Activated CD8-positive, alpha-beta T cell treated with anti-CD3 and anti-CD28 coated beads, Interleukin-2, amount 10 ng/mL, durations not matched to agents 7 days and 5 days (primary cell): ENCODE measurements at regions of chr10 and their contacts with region 1.

Region 1: GRCh38 chr10:12782537-12782936 is 219.0 kb downstream of the CCDC3 start:
- DNase-seq: peak; percentile 48
- ATAC-seq: no peak
- H3K4me3 Mint-ChIP-seq: no peak overlapping the region
- H3K27ac Mint-ChIP-seq: no peak overlapping the region
- H3K4me1 Mint-ChIP-seq: peaks cover 4% of the 10 kb centered on the region
- H3K27me3 Mint-ChIP-seq: no peaks in the 10 kb centered on the region

Region 2: DNA sequence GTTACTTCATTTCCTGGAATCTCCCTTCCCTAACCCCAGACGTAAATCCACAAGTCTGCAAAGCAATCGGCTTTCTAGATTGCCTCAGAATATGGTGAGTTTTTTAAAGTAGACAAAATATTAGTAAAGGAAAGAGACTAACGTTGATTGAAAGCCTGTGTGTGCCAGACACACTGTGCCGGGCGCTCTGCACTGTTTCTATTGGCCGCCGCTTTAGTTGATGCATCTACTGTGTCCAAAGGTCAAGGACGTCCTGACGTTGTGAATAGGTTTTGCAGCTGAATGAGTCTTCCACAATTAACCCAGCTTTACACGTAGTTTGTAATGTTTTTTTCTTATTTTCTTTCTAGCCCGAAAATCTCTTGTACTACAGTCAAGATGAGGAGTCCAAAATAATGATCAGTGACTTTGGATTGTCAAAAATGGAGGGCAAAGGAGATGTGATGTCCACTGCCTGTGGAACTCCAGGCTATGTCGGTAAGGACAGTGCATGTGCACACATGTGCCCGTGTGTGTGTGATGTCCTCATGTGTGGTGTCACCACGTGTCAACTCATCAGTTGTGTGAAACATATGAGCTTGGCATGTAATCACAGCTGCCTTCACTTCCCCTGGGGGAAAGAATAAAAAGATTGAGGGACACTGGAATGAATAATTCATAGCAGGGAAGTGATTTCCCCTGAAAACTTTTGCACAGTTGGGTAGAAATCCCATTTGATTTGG is 13.1 kb before region 1 on chr10:
- CTCF ChIA-PET with region 1: interaction called, 12 read pairs
- POLR2A ChIA-PET with region 1: no interaction called
- DNase-seq: no peak
- ATAC-seq: no peak
- H3K4me3 Mint-ChIP-seq: no peak overlapping the region
- H3K27ac Mint-ChIP-seq: no peak overlapping the region
- H3K4me1 Mint-ChIP-seq: no peaks in the 10 kb centered on the region
- H3K27me3 Mint-ChIP-seq: no peaks in the 10 kb centered on the region

Region 3: GRCh38 chr10:12902135-12902572 is 119.6 kb after region 1 on chr10:
- CTCF ChIA-PET with region 1: interaction called, 11 read pairs
- POLR2A ChIA-PET with region 1: no interaction called
- DNase-seq: peak; percentile 63
- ATAC-seq: no peak
- H3K4me3 Mint-ChIP-seq: no peak overlapping the region
- H3K27ac Mint-ChIP-seq: no peak overlapping the region
- H3K4me1 Mint-ChIP-seq: no peaks in the 10 kb centered on the region
- H3K27me3 Mint-ChIP-seq: peaks cover 2% of the 10 kb centered on the region

Region 4: DNA sequence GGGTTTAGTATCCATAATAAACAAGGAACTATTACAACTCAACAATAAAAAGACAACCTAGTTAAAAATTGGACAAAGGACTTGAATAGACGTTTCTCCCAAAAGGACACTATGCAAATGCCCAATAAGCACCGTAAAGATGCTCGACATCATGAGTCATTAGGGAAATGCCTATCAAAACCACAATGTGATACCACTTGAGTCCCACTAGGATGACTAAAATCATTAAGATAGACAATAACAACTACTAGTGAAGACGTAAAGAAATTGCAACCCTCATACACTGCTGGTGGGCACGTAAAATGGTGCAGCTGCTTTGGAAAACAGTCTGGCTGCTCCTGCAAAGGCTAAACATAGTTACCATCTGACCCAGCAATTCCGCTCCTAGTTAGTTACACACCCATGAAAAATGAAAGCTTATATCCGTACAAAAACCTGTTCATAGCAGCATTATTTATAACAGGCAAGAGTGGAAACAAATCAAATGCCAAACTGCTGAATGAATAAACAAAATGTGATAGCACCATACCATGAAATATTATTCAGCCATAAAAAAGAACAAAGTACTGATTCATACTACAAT is 201.7 kb after region 1 on chr10:
- CTCF ChIA-PET with region 1: no interaction called
- POLR2A ChIA-PET with region 1: no interaction called
- DNase-seq: no peak
- ATAC-seq: no peak
- H3K4me3 Mint-ChIP-seq: no peak overlapping the region
- H3K27ac Mint-ChIP-seq: no peak overlapping the region
- H3K4me1 Mint-ChIP-seq: no peaks in the 10 kb centered on the region
- H3K27me3 Mint-ChIP-seq: peaks cover 7% of the 10 kb centered on the region

Region 5: GRCh38 chr10:13160934-13161856 is 378.7 kb after region 1 on chr10 and contains the start of gene MCM10:
- CTCF ChIA-PET with region 1: no interaction called
- POLR2A ChIA-PET with region 1: no interaction called
- DNase-seq: peak; percentile 99
- ATAC-seq: peak; percentile 100
- H3K4me3 Mint-ChIP-seq: peak within 1 kb of the TSS; percentile 91
- H3K27ac Mint-ChIP-seq: peak within 1 kb of the TSS; percentile 86
- H3K4me1 Mint-ChIP-seq: peaks cover 47% of the 10 kb centered on the region
- H3K27me3 Mint-ChIP-seq: no peaks in the 10 kb centered on the region
- total RNA-seq, gene MCM10: 68.3 to 73.5 TPM